HEK293 (cell line): ENCODE measurements at regions of chr15 and their contacts with region 1.

Region 1: GRCh38 chr15:71730277-71731144 is 79.8 kb upstream of the NR2E3 start:
- H3K4me3 ChIP-seq: no peak overlapping the region
- H3K27ac ChIP-seq: no peak overlapping the region
- H3K4me1 ChIP-seq: no peaks in the 10 kb centered on the region
- CTCF ChIP-seq: peak; percentile 69

Region 2: GRCh38 chr15:71532994-71533393 is 197.5 kb before region 1 on chr15:
- CTCF ChIA-PET with region 1: interaction called, 13 read pairs
- POLR2A ChIA-PET with region 1: no interaction called
- H3K4me3 ChIP-seq: no peak overlapping the region
- H3K27ac ChIP-seq: no peak overlapping the region
- H3K4me1 ChIP-seq: no peaks in the 10 kb centered on the region
- CTCF ChIP-seq: peak; percentile 61

Region 3: DNA sequence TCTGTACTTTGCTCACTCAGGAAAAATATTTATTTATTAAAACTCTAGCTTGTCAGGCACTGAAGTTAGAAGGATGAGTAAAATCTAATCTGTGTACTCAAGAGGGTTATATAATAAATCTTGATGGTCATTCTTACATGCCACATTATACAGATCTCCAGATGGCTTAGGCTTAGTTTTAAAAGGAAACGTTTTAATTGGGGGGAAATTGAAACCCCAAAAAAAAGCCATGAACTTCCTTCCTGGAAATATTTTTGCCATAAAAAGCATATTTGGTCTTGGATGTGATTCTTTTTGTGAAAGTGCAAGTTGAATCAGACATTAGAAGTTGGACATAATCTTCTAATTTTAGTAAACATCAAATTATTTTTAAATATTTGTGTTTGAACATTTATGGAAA is 393.7 kb after region 1 on chr15:
- CTCF ChIA-PET with region 1: no interaction called
- POLR2A ChIA-PET with region 1: no interaction called
- H3K4me3 ChIP-seq: no peak overlapping the region
- H3K27ac ChIP-seq: no peak overlapping the region
- H3K4me1 ChIP-seq: peaks cover 12% of the 10 kb centered on the region
- CTCF ChIP-seq: no peak